ENCODE measurements at regions of chr7 and their contacts with region 1.

Region 1: GRCh38 chr7:13524076-13524475 is 465.4 kb downstream of the ETV1 start:
- DNase-seq: no peak
- ATAC-seq: no peak
- H3K4me3 ChIP-seq: no peak overlapping the region
- H3K27ac ChIP-seq: no peak overlapping the region
- H3K4me1 ChIP-seq: no peaks in the 10 kb centered on the region
- H3K27me3 ChIP-seq: no peaks in the 10 kb centered on the region
- CTCF ChIP-seq: no peak
- POLR2A ChIP-seq: no peak
- RAD21 ChIP-seq: no peak

Region 2: GRCh38 chr7:13742811-13743210 is 218.7 kb after region 1 on chr7:
- CTCF ChIA-PET with region 1: interaction called, 4 read pairs
- POLR2A ChIA-PET with region 1: no interaction called
- RAD21 ChIA-PET with region 1: no interaction called
- intact Hi-C with region 1: loop called (anchors 1 kb)
- DNase-seq: peak; percentile 39
- ATAC-seq: peak; percentile 77
- H3K4me3 ChIP-seq: no peak overlapping the region
- H3K27ac ChIP-seq: no peak overlapping the region
- H3K4me1 ChIP-seq: peaks cover 0 to 17% of the 10 kb centered on the region in 2 experiments; a peak in 3 of 4 replicates
- H3K27me3 ChIP-seq: no peaks in the 10 kb centered on the region
- CTCF ChIP-seq: peak; percentile 31 to 67 (median 48); a peak in 5 of 6 replicates
- POLR2A ChIP-seq: no peak
- RAD21 ChIP-seq: peak; percentile 59; the same call in 1 of the 2 replicates

Region 3: DNA sequence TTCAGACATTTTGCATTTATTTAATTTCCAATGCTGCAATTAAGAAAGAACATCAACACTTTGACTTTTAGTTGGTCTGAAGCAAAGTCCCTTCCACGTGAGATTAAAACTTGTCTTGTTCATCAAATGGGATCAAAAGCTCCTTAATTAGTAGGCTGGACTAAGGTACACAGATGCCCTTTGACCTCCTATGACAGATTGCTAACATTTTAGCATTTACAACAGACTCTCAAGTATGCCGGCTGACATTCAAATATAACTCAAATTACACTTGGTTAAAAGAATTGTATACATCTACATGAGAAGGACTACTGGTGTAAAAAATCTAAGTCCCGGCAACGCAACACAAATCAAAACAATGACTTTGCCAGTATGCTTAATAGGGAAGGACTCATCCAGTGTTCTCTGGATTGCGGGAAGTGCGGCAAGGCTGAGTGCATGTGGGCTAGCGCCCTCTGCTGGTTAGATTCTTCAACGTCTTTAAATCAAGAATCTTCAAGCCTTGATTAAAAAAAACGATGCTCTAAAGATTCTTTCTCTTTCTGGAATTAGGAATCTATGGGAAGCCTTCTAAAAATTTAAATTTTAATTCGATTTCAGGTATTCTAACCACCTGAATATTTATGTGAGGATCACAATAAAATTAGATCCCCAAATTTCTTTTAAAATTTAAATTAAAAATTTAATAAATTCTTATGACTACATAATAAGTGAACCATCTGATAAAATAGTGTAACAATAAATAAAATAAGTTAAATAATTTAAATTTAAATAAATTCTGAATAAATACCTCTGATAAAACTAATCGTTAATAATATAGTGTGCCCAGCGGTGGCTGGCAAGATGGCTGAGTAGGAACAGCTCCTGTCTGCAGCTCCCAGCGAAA is 933.7 kb after region 1 on chr7:
- CTCF ChIA-PET with region 1: no interaction called
- POLR2A ChIA-PET with region 1: no interaction called
- RAD21 ChIA-PET with region 1: no interaction called
- intact Hi-C with region 1: loop called (anchors 1 kb)
- DNase-seq: peak; percentile 83
- ATAC-seq: peak; percentile 90
- H3K4me3 ChIP-seq: 0 out of 4 replicates have a peak overlapping the region, but pooled peaks of 1 of the 2 experiments have one; percentile 16
- H3K27ac ChIP-seq: no peak overlapping the region
- H3K4me1 ChIP-seq: peaks cover 3 to 4% of the 10 kb centered on the region in 2 experiments; a peak in 3 of 4 replicates
- H3K27me3 ChIP-seq: no peaks in the 10 kb centered on the region
- CTCF ChIP-seq: peak; percentile 60 to 80 (median 71)
- POLR2A ChIP-seq: no peak
- RAD21 ChIP-seq: peak; percentile 88

Region 4: GRCh38 chr7:14691597-14692203 is 1167.6 kb after region 1 on chr7:
- CTCF ChIA-PET with region 1: no interaction called
- POLR2A ChIA-PET with region 1: no interaction called
- RAD21 ChIA-PET with region 1: no interaction called
- intact Hi-C with region 1: loop called (anchors 10 kb)
- DNase-seq: peak; percentile 32
- ATAC-seq: peak; percentile 53; the same call in 1 of the 2 replicates
- H3K4me3 ChIP-seq: no peak overlapping the region
- H3K27ac ChIP-seq: no peak overlapping the region
- H3K4me1 ChIP-seq: no peaks in the 10 kb centered on the region
- H3K27me3 ChIP-seq: no peaks in the 10 kb centered on the region
- CTCF ChIP-seq: peak; percentile 52 to 88 (median 65); a peak in 5 of 6 replicates
- POLR2A ChIP-seq: no peak
- RAD21 ChIP-seq: peak; percentile 73